ENCODE measurements at regions of chr1 and their contacts with region 1.

Region 1: GRCh38 chr1:221567859-221568507 is 173.9 kb downstream of the DUSP10 start:
- DNase-seq: no peak
- ATAC-seq: no peak

Region 2: GRCh38 chr1:221543529-221544120 is 24.4 kb before region 1 on chr1:
- intact Hi-C with region 1: no loop called
- DNase-seq: no peak
- ATAC-seq: peak; percentile 42

Region 3: GRCh38 chr1:221739018-221739676 is 171.2 kb after region 1 on chr1:
- intact Hi-C with region 1: loop called (anchors 10 kb)
- DNase-seq: no peak
- ATAC-seq: no peak

Measured in left ventricle myocardium superior (tissue), 1 donor.